Heart left ventricle (tissue), 16 donors: ENCODE measurements at regions of chr16 and their contacts with region 1.

Region 1: GRCh38 chr16:80899809-80900592 is 95.6 kb upstream of the CDYL2 start:
- DNase-seq: peak; percentile 83 to 92 (median 89)
- ATAC-seq: peak; percentile 73 to 96 (median 94)
- H3K4me3 ChIP-seq: peak overlapping the region in 8 of 12 donors; percentile 13 to 46 (median 22)
- H3K27ac ChIP-seq: peak overlapping the region in 11 of 12 donors; percentile 34 to 83 (median 69)
- H3K4me1 ChIP-seq: peaks cover 0 to 20% (median 8%) of the 10 kb centered on the region in 12 donors
- H3K27me3 ChIP-seq: no peaks in the 10 kb centered on the region
- CTCF ChIP-seq: peak in 1 of 12 donors; percentile 16
- POLR2A ChIP-seq: no peak

Region 2: DNA sequence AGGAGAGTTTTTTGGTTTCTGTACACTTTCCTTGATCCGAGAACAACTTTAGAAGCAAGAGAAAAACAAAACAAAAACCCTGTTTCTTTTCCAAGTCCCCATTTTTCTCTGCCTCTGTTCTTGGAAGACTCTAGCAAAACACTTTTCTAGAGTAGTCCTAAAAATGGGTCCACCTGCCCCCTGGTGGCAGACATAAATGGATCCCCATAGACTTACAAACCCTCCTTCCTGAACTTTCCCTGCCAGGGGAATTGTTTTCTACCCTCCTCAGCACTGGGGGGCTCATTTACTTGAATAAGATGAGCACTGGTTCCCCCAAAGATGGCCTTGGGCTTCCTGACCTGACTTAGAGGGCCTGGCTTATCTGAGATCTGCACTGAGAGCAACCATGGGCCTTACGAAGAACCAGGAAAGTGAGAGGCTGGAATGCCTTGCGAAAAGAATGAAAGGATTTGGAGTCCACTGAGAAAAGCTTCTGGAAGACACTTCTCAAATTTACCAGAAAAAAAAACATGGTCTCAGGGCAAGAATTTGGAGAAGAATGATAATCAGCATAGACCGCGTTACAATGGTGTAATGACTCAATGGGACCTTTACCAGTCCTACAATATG is 47.6 kb before region 1 on chr16:
- intact Hi-C with region 1: loop called in 1 of 10 experiments (anchors 5 kb)
- DNase-seq: no peak
- ATAC-seq: no peak
- H3K4me3 ChIP-seq: no peak overlapping the region
- H3K27ac ChIP-seq: no peak overlapping the region
- H3K4me1 ChIP-seq: no peaks in the 10 kb centered on the region
- H3K27me3 ChIP-seq: no peaks in the 10 kb centered on the region
- CTCF ChIP-seq: peak in 6 of 12 donors; percentile 13 to 36 (median 21)
- POLR2A ChIP-seq: no peak

Region 3: GRCh38 chr16:80931801-80932712 is 32.1 kb after region 1 on chr16:
- intact Hi-C with region 1: loop called in 1 of 10 experiments (anchors 2 kb)
- DNase-seq: peak; percentile 58 to 88 (median 78)
- ATAC-seq: peak; percentile 73 to 92 (median 86)
- H3K4me3 ChIP-seq: peak overlapping the region; percentile 14 to 65 (median 52)
- H3K27ac ChIP-seq: peak overlapping the region; percentile 33 to 91 (median 81)
- H3K4me1 ChIP-seq: peaks cover 0 to 22% (median 9%) of the 10 kb centered on the region in 12 donors
- H3K27me3 ChIP-seq: peaks cover 0 to 38% (median 0%) of the 10 kb centered on the region in 9 donors
- CTCF ChIP-seq: peak in 6 of 12 donors; percentile 3 to 27 (median 10)
- POLR2A ChIP-seq: no peak